ENCODE measurements at regions of chr7 and their contacts with region 1.

Region 1: GRCh38 chr7:121366852-121367431 is 29.2 kb downstream of the FAM3C start:
- DNase-seq: peak; percentile 41
- H3K4me3 ChIP-seq: no peak overlapping the region
- H3K27ac ChIP-seq: peak overlapping the region; percentile 12 to 26; a peak in 3 of 4 replicates
- H3K4me1 ChIP-seq: peaks cover 0 to 22% of the 10 kb centered on the region in 2 experiments; a peak in 3 of 4 replicates
- H3K27me3 ChIP-seq: no peaks in the 10 kb centered on the region
- CTCF ChIP-seq: peak; percentile 99
- EP300 ChIP-seq: no peak
- RAD21 ChIP-seq: peak; percentile 94

Region 2: GRCh38 chr7:121351679-121352078 is 15.3 kb before region 1 on chr7:
- CTCF ChIA-PET with region 1: interaction called, 64 read pairs
- POLR2A ChIA-PET with region 1: no interaction called
- DNase-seq: no peak
- H3K4me3 ChIP-seq: no peak overlapping the region; a peak in 1 of 4 replicates
- H3K27ac ChIP-seq: no peak overlapping the region
- H3K4me1 ChIP-seq: no peaks in the 10 kb centered on the region; a peak in 1 of 4 replicates
- H3K27me3 ChIP-seq: no peaks in the 10 kb centered on the region
- CTCF ChIP-seq: peak; percentile 45
- EP300 ChIP-seq: no peak
- RAD21 ChIP-seq: no peak

Region 3: GRCh38 chr7:121385800-121386179 is 18.8 kb after region 1 on chr7:
- CTCF ChIA-PET with region 1: interaction called, 59 read pairs
- POLR2A ChIA-PET with region 1: no interaction called
- DNase-seq: no peak
- H3K4me3 ChIP-seq: no peak overlapping the region
- H3K27ac ChIP-seq: no peak overlapping the region
- H3K4me1 ChIP-seq: peaks cover 2 to 29% of the 10 kb centered on the region in 2 experiments; a peak in 3 of 4 replicates
- H3K27me3 ChIP-seq: no peaks in the 10 kb centered on the region
- CTCF ChIP-seq: no peak
- EP300 ChIP-seq: no peak
- RAD21 ChIP-seq: no peak

Region 4: GRCh38 chr7:121431996-121432395 is 65.1 kb after region 1 on chr7:
- CTCF ChIA-PET with region 1: no interaction called
- POLR2A ChIA-PET with region 1: no interaction called
- DNase-seq: no peak
- H3K4me3 ChIP-seq: no peak overlapping the region
- H3K27ac ChIP-seq: no peak overlapping the region
- H3K4me1 ChIP-seq: no peaks in the 10 kb centered on the region
- H3K27me3 ChIP-seq: no peaks in the 10 kb centered on the region
- CTCF ChIP-seq: no peak
- EP300 ChIP-seq: no peak
- RAD21 ChIP-seq: no peak

Region 5: DNA sequence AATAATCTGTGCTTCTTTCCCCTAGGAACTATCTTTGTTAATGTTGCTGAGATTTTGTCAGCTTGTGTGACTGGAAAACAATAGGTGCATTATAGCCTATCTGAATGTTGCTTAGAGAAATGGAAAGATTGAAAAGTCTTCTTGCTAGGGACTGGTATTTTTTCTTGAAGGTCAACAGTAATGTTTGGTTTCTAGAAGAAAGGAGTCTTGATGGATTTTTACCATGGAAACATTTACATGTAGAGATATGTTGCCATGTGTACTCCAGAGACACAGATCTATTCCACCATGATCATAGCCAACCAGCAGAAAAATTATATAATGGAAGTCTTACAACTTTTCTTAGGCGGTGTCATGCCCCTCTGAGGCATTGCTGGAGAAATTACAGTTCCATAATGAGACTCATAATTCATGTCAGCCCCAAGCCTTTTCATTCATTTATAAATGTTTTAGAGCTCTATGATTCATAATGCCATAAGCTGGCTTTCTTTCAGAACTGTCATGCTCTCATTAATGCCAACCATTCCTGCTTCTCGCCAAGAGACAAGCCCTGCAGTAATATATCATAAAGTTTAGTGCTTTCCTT is 330.9 kb after region 1 on chr7:
- CTCF ChIA-PET with region 1: no interaction called
- POLR2A ChIA-PET with region 1: no interaction called
- DNase-seq: no peak
- H3K4me3 ChIP-seq: no peak overlapping the region
- H3K27ac ChIP-seq: no peak overlapping the region
- H3K4me1 ChIP-seq: no peaks in the 10 kb centered on the region
- H3K27me3 ChIP-seq: no peaks in the 10 kb centered on the region
- CTCF ChIP-seq: no peak
- EP300 ChIP-seq: no peak
- RAD21 ChIP-seq: no peak